Transverse colon (tissue), 4 donors: ENCODE measurements at regions of chr9 and their contacts with region 1.

Region 1: GRCh38 chr9:68584189-68585033 is 43.7 kb upstream of the TMEM252 start:
- DNase-seq: peak; percentile 87
- H3K4me3 ChIP-seq: no peak overlapping the region
- H3K27ac ChIP-seq: no peak overlapping the region
- H3K4me1 ChIP-seq: no peaks in the 10 kb centered on the region
- H3K27me3 ChIP-seq: no peaks in the 10 kb centered on the region
- CTCF ChIP-seq: peak; percentile 97 to 99 (median 97)
- EP300 ChIP-seq: no peak
- POLR2A ChIP-seq: no peak

Region 2: DNA sequence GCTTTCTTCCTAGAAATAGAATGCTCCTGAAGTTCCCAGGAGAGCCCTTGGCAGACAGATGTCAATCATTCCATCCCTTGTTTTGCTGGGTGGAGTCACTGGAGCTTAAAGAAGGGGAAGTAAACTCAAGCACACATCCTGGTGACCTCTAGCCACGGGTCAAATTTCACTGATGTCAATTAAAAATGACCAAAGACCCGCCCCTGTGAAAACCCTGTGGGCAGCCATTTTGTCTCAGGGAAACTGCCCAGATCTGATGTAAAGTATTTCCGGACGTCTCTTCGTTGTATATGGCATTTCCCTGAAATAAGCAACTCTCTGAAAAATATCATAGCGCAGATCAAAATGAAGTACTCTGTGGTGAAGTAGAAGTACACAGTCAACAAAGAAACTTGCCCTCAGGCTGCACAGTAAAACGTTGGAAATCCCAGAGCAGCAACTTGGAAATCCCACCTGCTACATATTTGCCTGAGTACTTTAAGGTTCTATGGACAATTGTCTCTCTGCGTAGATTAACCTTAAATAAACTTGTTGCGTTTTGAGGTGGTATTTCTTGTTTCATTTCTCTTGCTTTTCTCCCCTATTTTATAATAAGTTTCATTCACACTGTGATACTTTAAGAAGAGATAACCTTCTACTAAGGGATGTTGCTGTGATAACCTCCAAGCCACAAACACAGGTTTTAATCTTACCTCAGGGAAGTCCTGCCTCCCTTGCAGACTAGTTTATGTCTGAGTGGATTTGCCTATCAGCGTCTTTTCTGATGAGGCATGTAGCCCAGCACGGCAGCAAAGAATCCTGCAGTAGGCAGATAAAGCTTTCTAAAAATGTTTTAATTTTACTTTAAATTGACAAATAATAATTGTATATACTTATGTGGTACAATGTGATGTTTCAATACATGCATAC is 59.7 kb after region 1 on chr9:
- in situ Hi-C with region 1: no loop called
- intact Hi-C with region 1: no loop called
- DNase-seq: no peak
- H3K4me3 ChIP-seq: no peak overlapping the region
- H3K27ac ChIP-seq: no peak overlapping the region
- H3K4me1 ChIP-seq: peaks cover 0 to 11% (median 0%) of the 10 kb centered on the region in 4 donors
- H3K27me3 ChIP-seq: no peaks in the 10 kb centered on the region
- CTCF ChIP-seq: no peak
- EP300 ChIP-seq: no peak
- POLR2A ChIP-seq: no peak

Region 3: GRCh38 chr9:68678430-68678829 is 94.0 kb after region 1 on chr9:
- in situ Hi-C with region 1: loop called in 2 of 4 experiments (anchors 10 to 25 kb)
- intact Hi-C with region 1: no loop called
- DNase-seq: peak; percentile 10
- H3K4me3 ChIP-seq: no peak overlapping the region
- H3K27ac ChIP-seq: no peak overlapping the region
- H3K4me1 ChIP-seq: no peaks in the 10 kb centered on the region
- H3K27me3 ChIP-seq: peaks cover 7% of the 10 kb centered on the region
- CTCF ChIP-seq: no peak
- EP300 ChIP-seq: no peak
- POLR2A ChIP-seq: no peak

Region 4: DNA sequence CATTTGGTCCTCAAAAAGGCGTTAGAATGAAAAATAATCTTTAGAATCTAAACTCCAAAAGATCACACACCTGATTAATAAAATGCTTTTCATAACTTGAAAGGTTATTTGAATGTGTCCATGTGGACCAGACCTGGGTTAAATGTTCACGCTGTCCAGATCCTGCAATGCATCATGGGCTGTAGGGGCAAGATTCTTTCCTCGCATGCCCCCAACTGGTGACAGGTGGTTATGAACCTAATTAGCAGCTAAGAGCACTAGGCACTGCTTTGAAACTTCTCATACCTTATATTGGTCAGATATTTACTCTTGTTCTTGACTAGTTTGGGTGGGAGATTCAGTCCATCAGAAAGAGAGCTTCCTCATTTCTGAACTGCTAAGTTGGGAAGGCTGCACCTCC is 101.4 kb after region 1 on chr9:
- in situ Hi-C with region 1: loop called in 1 of 4 experiments (anchors 25 kb)
- intact Hi-C with region 1: no loop called
- DNase-seq: peak; percentile 67
- H3K4me3 ChIP-seq: no peak overlapping the region
- H3K27ac ChIP-seq: no peak overlapping the region
- H3K4me1 ChIP-seq: no peaks in the 10 kb centered on the region
- H3K27me3 ChIP-seq: peaks cover 4% of the 10 kb centered on the region
- CTCF ChIP-seq: peak; percentile 44 to 67 (median 49)
- EP300 ChIP-seq: no peak
- POLR2A ChIP-seq: no peak

Region 5: GRCh38 chr9:68762570-68762969 is 178.2 kb after region 1 on chr9:
- in situ Hi-C with region 1: no loop called
- intact Hi-C with region 1: no loop called
- DNase-seq: no peak
- H3K4me3 ChIP-seq: no peak overlapping the region
- H3K27ac ChIP-seq: no peak overlapping the region
- H3K4me1 ChIP-seq: no peaks in the 10 kb centered on the region
- H3K27me3 ChIP-seq: no peaks in the 10 kb centered on the region
- CTCF ChIP-seq: no peak
- EP300 ChIP-seq: no peak
- POLR2A ChIP-seq: no peak

Region 6: DNA sequence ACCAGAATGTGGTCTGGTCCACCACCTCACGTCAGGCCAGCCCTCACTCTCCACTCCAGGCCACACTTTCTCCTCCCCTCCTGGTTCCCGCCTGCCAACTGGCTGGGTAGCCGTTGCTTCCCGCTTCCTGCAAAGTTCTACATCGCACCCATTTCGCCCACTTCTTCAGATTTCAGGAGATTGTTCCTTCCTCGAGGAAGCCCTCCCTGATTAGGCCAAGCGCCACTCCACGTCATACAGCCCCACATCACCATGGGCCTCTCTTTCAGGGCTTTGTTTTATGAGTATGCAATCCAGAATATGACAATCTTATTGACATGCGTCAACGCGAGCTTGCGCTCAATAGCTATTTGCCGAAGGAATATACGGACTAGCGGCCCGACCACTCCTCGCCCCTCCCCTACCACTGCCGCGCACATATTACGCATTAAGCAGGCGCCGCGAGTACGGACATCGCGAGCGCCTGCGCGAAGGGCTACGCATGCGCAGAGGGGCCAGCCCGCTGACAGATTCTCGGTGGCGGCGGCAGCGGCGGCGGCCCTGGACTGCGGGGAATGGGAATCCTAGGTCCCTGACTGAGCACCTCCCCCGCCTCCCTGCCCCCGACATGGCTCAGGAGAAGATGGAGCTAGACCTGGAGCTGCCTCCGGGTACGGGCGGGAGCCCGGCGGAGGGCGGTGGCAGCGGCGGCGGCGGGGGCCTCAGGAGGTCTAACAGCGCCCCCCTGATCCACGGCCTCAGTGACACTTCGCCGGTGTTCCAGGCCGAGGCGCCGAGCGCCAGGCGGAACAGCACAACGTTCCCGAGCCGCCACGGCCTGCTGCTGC is 195.4 kb after region 1 on chr9:
- in situ Hi-C with region 1: loop called in 1 of 4 experiments (anchors 25 kb)
- intact Hi-C with region 1: no loop called
- DNase-seq: peak; percentile 95
- H3K4me3 ChIP-seq: peak overlapping the region; percentile 47 to 81 (median 63)
- H3K27ac ChIP-seq: peak overlapping the region; percentile 92 to 96 (median 94)
- H3K4me1 ChIP-seq: peaks cover 33 to 66% (median 54%) of the 10 kb centered on the region in 4 donors
- H3K27me3 ChIP-seq: no peaks in the 10 kb centered on the region
- CTCF ChIP-seq: peak in 3 of 5 experiments; percentile 9 to 35 (median 18)
- EP300 ChIP-seq: no peak
- POLR2A ChIP-seq: peak; percentile 86